ENCODE measurements at regions of chr10 and their contacts with region 1.

Region 1: GRCh38 chr10:99799613-99800012 is 17.2 kb downstream of the ABCC2 start:
- DNase-seq: no peak
- H3K4me3 ChIP-seq: no peak overlapping the region
- H3K27ac ChIP-seq: no peak overlapping the region
- H3K4me1 ChIP-seq: no peaks in the 10 kb centered on the region
- H3K27me3 ChIP-seq: no peaks in the 10 kb centered on the region
- CTCF ChIP-seq: peak in 2 of 3 experiments; percentile 18 to 31; a peak in 2 of 4 replicates
- EP300 ChIP-seq: no peak
- POLR2A ChIP-seq: no peak
- RAD21 ChIP-seq: peak in 1 of 2 experiments; percentile 14; a peak in 1 of 4 replicates

Region 2: GRCh38 chr10:99742701-99743100 is 56.9 kb before region 1 on chr10:
- CTCF ChIA-PET with region 1: no interaction called
- POLR2A ChIA-PET with region 1: no interaction called
- DNase-seq: no peak
- H3K4me3 ChIP-seq: no peak overlapping the region
- H3K27ac ChIP-seq: no peak overlapping the region
- H3K4me1 ChIP-seq: no peaks in the 10 kb centered on the region
- H3K27me3 ChIP-seq: no peaks in the 10 kb centered on the region
- CTCF ChIP-seq: no peak
- EP300 ChIP-seq: no peak
- POLR2A ChIP-seq: no peak
- RAD21 ChIP-seq: no peak

Region 3: GRCh38 chr10:99784727-99785441 is 14.7 kb before region 1 on chr10:
- CTCF ChIA-PET with region 1: interaction called, 11 read pairs
- POLR2A ChIA-PET with region 1: interaction called, 3 read pairs
- DNase-seq: no peak
- H3K4me3 ChIP-seq: no peak overlapping the region
- H3K27ac ChIP-seq: no peak overlapping the region
- H3K4me1 ChIP-seq: peaks cover 0 to 10% (median 5%) of the 10 kb centered on the region in 4 experiments; a peak in 5 of 7 replicates
- H3K27me3 ChIP-seq: no peaks in the 10 kb centered on the region; a peak in 1 of 7 replicates
- CTCF ChIP-seq: no peak
- EP300 ChIP-seq: no peak
- POLR2A ChIP-seq: no peak
- RAD21 ChIP-seq: no peak

Region 4: GRCh38 chr10:99812177-99812576 is 12.6 kb after region 1 on chr10:
- CTCF ChIA-PET with region 1: interaction called, 11 read pairs
- POLR2A ChIA-PET with region 1: no interaction called
- DNase-seq: no peak
- H3K4me3 ChIP-seq: no peak overlapping the region
- H3K27ac ChIP-seq: no peak overlapping the region
- H3K4me1 ChIP-seq: no peaks in the 10 kb centered on the region
- H3K27me3 ChIP-seq: no peaks in the 10 kb centered on the region
- CTCF ChIP-seq: no peak
- EP300 ChIP-seq: no peak
- POLR2A ChIP-seq: no peak
- RAD21 ChIP-seq: no peak

Region 5: GRCh38 chr10:99976886-99977665 is 177.5 kb after region 1 on chr10:
- CTCF ChIA-PET with region 1: no interaction called
- POLR2A ChIA-PET with region 1: no interaction called
- DNase-seq: no peak
- H3K4me3 ChIP-seq: no peak overlapping the region
- H3K27ac ChIP-seq: no peak overlapping the region
- H3K4me1 ChIP-seq: peaks cover 0 to 10% (median 1%) of the 10 kb centered on the region in 4 experiments; a peak in 2 of 7 replicates
- H3K27me3 ChIP-seq: no peaks in the 10 kb centered on the region
- CTCF ChIP-seq: no peak
- EP300 ChIP-seq: no peak
- POLR2A ChIP-seq: no peak
- RAD21 ChIP-seq: no peak

Region 6: GRCh38 chr10:100138921-100139496 is 339.4 kb after region 1 on chr10:
- CTCF ChIA-PET with region 1: no interaction called
- POLR2A ChIA-PET with region 1: no interaction called
- DNase-seq: no peak
- H3K4me3 ChIP-seq: no peak overlapping the region
- H3K27ac ChIP-seq: no peak overlapping the region
- H3K4me1 ChIP-seq: no peaks in the 10 kb centered on the region
- H3K27me3 ChIP-seq: no peaks in the 10 kb centered on the region; a peak in 1 of 7 replicates
- CTCF ChIP-seq: no peak
- EP300 ChIP-seq: no peak
- POLR2A ChIP-seq: no peak
- RAD21 ChIP-seq: no peak

Measured in H1 (cell line).